Motor neuron (in vitro differentiated cells): ENCODE measurements at regions of chr11 and their contacts with region 1.

Region 1: DNA sequence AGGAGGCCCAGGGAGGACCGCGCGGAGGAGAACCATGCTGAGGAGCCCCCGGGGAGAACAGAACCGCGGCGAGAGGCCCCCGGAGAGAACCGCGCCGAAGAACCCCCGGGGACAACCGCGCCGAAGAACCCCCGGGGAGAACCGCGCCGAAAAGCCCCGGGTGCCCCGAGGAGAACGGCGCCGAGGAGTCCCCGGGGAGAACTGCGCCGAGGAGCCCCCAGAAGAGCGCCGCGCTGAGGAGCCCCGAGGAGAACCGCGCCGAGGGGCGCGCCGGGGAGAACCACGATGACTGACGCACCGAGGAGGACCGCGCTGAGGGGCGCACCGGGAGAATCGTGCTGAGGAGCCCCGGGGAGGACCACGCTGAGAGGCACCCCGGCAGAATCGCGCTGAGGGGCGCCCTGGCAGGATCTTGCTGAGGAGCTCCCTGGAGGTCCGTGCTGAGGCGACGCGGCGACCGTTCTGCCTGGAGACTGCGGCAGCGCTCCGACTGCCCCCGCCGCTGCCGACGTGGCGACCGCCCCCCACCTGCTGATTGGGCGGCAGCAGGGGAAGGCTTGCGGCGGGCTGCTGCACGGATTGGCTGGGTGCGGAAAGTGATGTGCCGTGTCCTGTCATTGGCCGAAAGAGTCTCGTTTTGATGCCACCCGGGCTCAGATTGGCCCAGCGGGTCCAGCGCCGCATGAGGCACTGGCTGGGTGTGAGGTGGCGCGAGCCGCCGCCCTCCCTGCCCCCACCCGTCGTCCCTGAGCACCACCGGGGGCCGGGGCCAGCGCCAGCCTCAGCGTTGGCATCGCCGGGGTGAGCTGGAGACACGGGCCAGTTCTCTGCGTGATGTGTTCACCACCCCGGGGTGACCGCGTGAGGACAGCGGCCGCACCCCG is at the start of gene KCNQ1OT1:
- ATAC-seq: peak; percentile 73 to 96 (median 86)
- H3K4me3 ChIP-seq: peak within 1 kb of the TSS; percentile 45 to 83 (median 56)
- H3K27ac ChIP-seq: peak within 1 kb of the TSS; percentile 95 to 98
- H3K4me1 ChIP-seq: peaks cover 45 to 58% of the 10 kb centered on the region in 2 donors
- total RNA-seq, gene KCNQ1OT1: 1.2 to 6.3 (median 3.8) TPM

Region 2: DNA sequence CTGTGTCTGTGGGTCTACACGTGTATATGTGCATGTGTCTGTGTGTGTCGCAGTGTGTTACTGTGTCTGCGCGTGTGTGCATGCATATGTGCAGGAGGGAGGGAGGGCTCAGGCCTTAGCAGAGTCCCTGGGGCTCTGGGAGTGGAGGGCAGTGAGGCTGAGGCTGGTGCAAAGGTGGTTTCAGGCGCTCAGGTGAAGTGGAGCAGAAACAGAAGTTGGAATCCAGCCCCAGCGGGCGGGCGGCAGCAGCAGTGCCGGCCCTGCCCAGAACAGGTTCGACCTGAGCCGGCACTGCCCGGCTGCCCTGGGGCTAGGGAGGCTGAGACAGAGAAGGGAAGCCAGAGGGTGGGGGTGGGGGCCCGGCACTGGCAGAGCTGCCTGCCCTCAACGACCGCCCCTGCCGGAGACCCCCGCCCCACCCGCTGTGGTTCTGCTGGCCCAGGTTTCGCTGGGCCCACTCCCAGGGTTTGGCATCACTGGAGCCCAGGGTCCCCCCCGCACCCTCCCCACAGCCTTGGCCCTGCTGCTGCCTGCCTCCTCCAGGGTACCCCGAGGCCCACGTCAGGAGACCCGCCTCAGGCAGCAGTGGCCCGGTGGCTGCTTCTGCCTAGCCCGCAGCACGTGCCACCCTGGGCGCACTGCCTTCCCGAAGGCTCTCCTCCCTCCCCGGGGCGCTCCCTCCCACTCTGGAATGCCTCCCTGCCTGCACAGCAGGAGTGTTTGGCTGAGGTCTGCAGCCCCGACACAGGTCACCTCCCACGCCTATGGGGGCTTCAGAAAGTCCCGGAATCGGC is 442.7 kb before region 1 on chr11:
- in situ Hi-C with region 1: no loop called
- ATAC-seq: peak in 1 of 8 experiments; percentile 12
- H3K4me3 ChIP-seq: no peak overlapping the region
- H3K27ac ChIP-seq: no peak overlapping the region
- H3K4me1 ChIP-seq: no peaks in the 10 kb centered on the region

Region 3: GRCh38 chr11:2592559-2593392 is 107.0 kb before region 1 on chr11:
- in situ Hi-C with region 1: no loop called
- ATAC-seq: no peak
- H3K4me3 ChIP-seq: no peak overlapping the region
- H3K27ac ChIP-seq: no peak overlapping the region
- H3K4me1 ChIP-seq: peaks cover 5 to 18% of the 10 kb centered on the region in 2 donors

Region 4: DNA sequence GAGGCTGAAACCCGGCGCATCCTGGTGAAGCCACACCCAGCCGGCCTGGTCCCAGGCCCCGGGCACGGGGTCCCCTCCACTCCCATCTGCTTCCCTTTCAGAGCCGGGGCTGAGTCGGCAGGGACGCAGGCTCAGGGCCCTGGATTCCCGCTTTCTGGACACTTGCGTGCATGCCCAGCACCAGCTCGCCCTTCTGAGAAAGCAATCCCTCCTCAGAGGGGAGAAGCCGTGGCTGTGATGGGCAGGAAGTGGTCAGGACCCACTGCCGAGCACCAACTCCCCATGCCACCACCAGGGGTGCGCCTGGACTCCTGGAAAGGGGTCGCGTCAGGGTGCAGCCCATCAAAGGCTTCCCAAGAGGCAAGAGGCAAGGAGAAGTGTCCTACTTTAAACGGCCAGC is 170.7 kb after region 1 on chr11:
- in situ Hi-C with region 1: loop called in 6 of 9 experiments (anchors 10 to 25 kb)
- ATAC-seq: peak in 1 of 8 experiments; percentile 33
- H3K4me3 ChIP-seq: no peak overlapping the region
- H3K27ac ChIP-seq: no peak overlapping the region
- H3K4me1 ChIP-seq: peaks cover 33 to 47% of the 10 kb centered on the region in 2 donors

Region 5: GRCh38 chr11:2930704-2931428 is 231.1 kb after region 1 on chr11:
- in situ Hi-C with region 1: no loop called
- ATAC-seq: peak in 6 of 8 experiments; percentile 17 to 47 (median 42)
- H3K4me3 ChIP-seq: peak overlapping the region in 1 of 5 donors; percentile 53
- H3K27ac ChIP-seq: peak overlapping the region in 1 of 2 donors; percentile 58
- H3K4me1 ChIP-seq: peaks cover 7 to 12% of the 10 kb centered on the region in 2 donors

Region 6: DNA sequence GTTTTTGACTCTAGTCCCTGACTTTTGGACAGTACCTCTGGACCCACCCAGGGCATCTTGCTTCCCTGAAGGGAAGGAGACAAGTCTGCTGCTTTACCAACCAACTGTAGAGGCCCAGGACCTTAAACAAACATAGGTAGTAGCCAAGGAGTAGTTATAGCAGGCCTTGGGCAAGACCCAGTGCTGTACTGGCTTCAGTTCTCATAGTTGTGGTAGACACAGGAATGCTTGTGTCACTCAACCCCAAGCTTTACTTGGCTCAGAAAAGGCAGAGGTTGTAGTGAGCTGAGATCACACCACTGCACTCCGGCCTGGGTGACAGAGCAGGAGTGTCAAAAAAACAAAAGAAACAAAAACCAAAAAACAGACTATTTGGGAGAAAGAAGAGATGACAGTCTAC is 1823.9 kb after region 1 on chr11:
- in situ Hi-C with region 1: no loop called
- ATAC-seq: peak in 1 of 8 experiments; percentile 24
- H3K4me3 ChIP-seq: no peak overlapping the region
- H3K27ac ChIP-seq: no peak overlapping the region
- H3K4me1 ChIP-seq: no peaks in the 10 kb centered on the region